ENCODE measurements at regions of chr19 and their contacts with region 1.

Region 1: DNA sequence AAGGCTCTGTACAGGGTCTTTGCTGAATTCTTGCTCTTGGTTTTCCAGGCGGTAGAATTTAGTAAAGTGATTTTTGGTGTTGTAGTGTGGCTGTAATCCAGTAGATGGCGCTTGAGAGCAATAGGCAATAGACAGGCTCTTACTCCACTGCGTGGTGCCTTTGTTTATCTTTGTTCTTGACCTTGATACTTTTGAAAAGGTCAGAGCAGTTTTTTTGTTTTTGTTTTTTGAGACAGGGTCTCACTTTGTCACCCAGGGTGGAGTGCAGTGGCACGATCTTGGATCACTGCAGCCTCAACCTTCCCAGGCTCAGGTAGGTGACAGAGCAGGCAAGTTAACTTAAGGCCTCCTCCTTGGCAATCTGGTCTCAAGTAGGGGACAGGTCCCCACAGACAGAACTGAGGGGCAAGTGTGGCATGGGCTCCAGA is 12.2 kb upstream of the LILRA5 start:
- DNase-seq: no peak
- H3K4me3 ChIP-seq: no peak overlapping the region
- H3K27ac ChIP-seq: no peak overlapping the region
- H3K4me1 ChIP-seq: no peaks in the 10 kb centered on the region
- H3K27me3 ChIP-seq: peaks cover 13% of the 10 kb centered on the region
- CTCF ChIP-seq: peak; percentile 68 to 86 (median 80)
- EP300 ChIP-seq: no peak
- POLR2A ChIP-seq: no peak

Region 2: DNA sequence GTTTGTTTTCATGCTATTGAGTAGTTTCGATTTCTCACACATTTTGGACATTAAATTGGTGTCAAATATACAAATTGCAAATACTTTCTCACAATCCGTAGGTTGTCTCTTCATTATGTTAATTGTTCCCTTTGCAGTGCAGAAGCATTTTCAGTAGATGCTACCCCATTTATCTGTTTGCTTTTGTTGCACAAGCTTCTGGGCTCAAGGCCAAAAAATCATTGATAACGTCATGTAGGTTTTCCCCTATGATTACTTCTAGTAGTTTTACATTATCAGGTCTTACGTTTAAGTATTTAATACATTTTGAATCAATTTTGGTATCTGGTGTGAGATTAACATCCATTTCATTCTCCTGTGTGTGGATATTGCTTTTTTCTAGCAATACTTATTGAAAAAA is 1152.3 kb before region 1 on chr19:
- in situ Hi-C with region 1: no loop called
- intact Hi-C with region 1: no loop called
- DNase-seq: no peak
- H3K4me3 ChIP-seq: no peak overlapping the region
- H3K27ac ChIP-seq: no peak overlapping the region
- H3K4me1 ChIP-seq: no peaks in the 10 kb centered on the region
- H3K27me3 ChIP-seq: no peaks in the 10 kb centered on the region
- CTCF ChIP-seq: no peak
- EP300 ChIP-seq: no peak
- POLR2A ChIP-seq: no peak

Region 3: GRCh38 chr19:54248016-54248601 is 77.1 kb before region 1 on chr19:
- in situ Hi-C with region 1: no loop called
- intact Hi-C with region 1: no loop called
- DNase-seq: peak; percentile 36
- H3K4me3 ChIP-seq: no peak overlapping the region
- H3K27ac ChIP-seq: no peak overlapping the region
- H3K4me1 ChIP-seq: no peaks in the 10 kb centered on the region
- H3K27me3 ChIP-seq: peaks cover 12% of the 10 kb centered on the region
- CTCF ChIP-seq: no peak
- EP300 ChIP-seq: no peak
- POLR2A ChIP-seq: no peak

Region 4: GRCh38 chr19:54390942-54391577 is 65.9 kb after region 1 on chr19:
- in situ Hi-C with region 1: loop called in 1 of 4 experiments (anchors 10 kb)
- intact Hi-C with region 1: no loop called
- DNase-seq: peak; percentile 40
- H3K4me3 ChIP-seq: no peak overlapping the region
- H3K27ac ChIP-seq: no peak overlapping the region
- H3K4me1 ChIP-seq: peaks cover 0 to 13% (median 0%) of the 10 kb centered on the region in 4 donors
- H3K27me3 ChIP-seq: peaks cover 52% of the 10 kb centered on the region
- CTCF ChIP-seq: peak; percentile 64 to 74 (median 69)
- EP300 ChIP-seq: no peak
- POLR2A ChIP-seq: no peak

Measured in transverse colon (tissue), 4 donors.